ENCODE measurements at regions of chr3 and their contacts with region 1.

Region 1: GRCh38 chr3:15309662-15310335 is 22.6 kb downstream of the SH3BP5 start:
- DNase-seq: no peak
- ATAC-seq: peak; percentile 33
- H3K4me3 ChIP-seq: no peak overlapping the region
- H3K27ac ChIP-seq: peak overlapping the region; percentile 78
- H3K4me1 ChIP-seq: peaks cover 44% of the 10 kb centered on the region
- H3K27me3 ChIP-seq: no peaks in the 10 kb centered on the region
- CTCF ChIP-seq: no peak
- EP300 ChIP-seq: no peak
- POLR2A ChIP-seq: no peak
- RAD21 ChIP-seq: no peak

Region 2: GRCh38 chr3:15291589-15292541 is 17.9 kb before region 1 on chr3:
- CTCF ChIA-PET with region 1: interaction called, 7 read pairs
- POLR2A ChIA-PET with region 1: interaction called, 4 read pairs
- RAD21 ChIA-PET with region 1: interaction called, 12 read pairs
- SMC1A ChIA-PET with region 1: interaction called, 10 read pairs
- in situ Hi-C with region 1: no loop called
- intact Hi-C with region 1: loop called (anchors 2 kb)
- DNase-seq: peak; percentile 89
- ATAC-seq: peak; percentile 95
- H3K4me3 ChIP-seq: peak overlapping the region; percentile 17; the same call in 1 of the 2 replicates
- H3K27ac ChIP-seq: peak overlapping the region; percentile 73
- H3K4me1 ChIP-seq: peaks cover 38% of the 10 kb centered on the region
- H3K27me3 ChIP-seq: no peaks in the 10 kb centered on the region
- CTCF ChIP-seq: no peak
- EP300 ChIP-seq: peak; percentile 61 to 64; a peak in 3 of 4 replicates
- POLR2A ChIP-seq: no peak
- RAD21 ChIP-seq: no peak

Region 3: GRCh38 chr3:15601397-15602145 is 291.8 kb after region 1 on chr3 and contains the starts of genes BTD and HACL1:
- CTCF ChIA-PET with region 1: no interaction called
- POLR2A ChIA-PET with region 1: no interaction called
- RAD21 ChIA-PET with region 1: no interaction called
- SMC1A ChIA-PET with region 1: no interaction called
- in situ Hi-C with region 1: no loop called
- intact Hi-C with region 1: no loop called
- DNase-seq: peak; percentile 99
- ATAC-seq: peak; percentile 96
- H3K4me3 ChIP-seq: peak within 1 kb of the TSS; percentile 91
- H3K27ac ChIP-seq: peak within 1 kb of the TSS; percentile 81
- H3K4me1 ChIP-seq: no peaks in the 10 kb centered on the region; the same call in 1 of the 2 replicates
- H3K27me3 ChIP-seq: no peaks in the 10 kb centered on the region
- CTCF ChIP-seq: peak in 2 of 3 experiments; percentile 28 to 40; a peak in 5 of 6 replicates
- EP300 ChIP-seq: no peak
- POLR2A ChIP-seq: peak; percentile 86
- RAD21 ChIP-seq: no peak
- polyA plus RNA-seq, gene BTD: 6.1 to 9.2 TPM
- polyA plus RNA-seq, gene HACL1: 34.1 to 40.3 TPM